ENCODE measurements at regions of chr19 and their contacts with region 1.

Region 1: GRCh38 chr19:17654993-17655392 is 33.2 kb downstream of the UNC13A start:
- DNase-seq: no peak
- ATAC-seq: no peak
- H3K4me3 Mint-ChIP-seq: no peak overlapping the region
- H3K27ac Mint-ChIP-seq: no peak overlapping the region
- H3K4me1 Mint-ChIP-seq: no peaks in the 10 kb centered on the region
- H3K27me3 Mint-ChIP-seq: peaks cover 25% of the 10 kb centered on the region
- CTCF ChIP-seq: no peak

Region 2: GRCh38 chr19:17156927-17157302 is 498.1 kb before region 1 on chr19:
- CTCF ChIA-PET with region 1: no interaction called
- POLR2A ChIA-PET with region 1: no interaction called
- intact Hi-C with region 1: no loop called
- DNase-seq: no peak
- ATAC-seq: peak; percentile 62
- H3K4me3 Mint-ChIP-seq: no peak overlapping the region
- H3K27ac Mint-ChIP-seq: peak overlapping the region; percentile 41
- H3K4me1 Mint-ChIP-seq: no peaks in the 10 kb centered on the region
- H3K27me3 Mint-ChIP-seq: no peaks in the 10 kb centered on the region
- CTCF ChIP-seq: no peak

Region 3: DNA sequence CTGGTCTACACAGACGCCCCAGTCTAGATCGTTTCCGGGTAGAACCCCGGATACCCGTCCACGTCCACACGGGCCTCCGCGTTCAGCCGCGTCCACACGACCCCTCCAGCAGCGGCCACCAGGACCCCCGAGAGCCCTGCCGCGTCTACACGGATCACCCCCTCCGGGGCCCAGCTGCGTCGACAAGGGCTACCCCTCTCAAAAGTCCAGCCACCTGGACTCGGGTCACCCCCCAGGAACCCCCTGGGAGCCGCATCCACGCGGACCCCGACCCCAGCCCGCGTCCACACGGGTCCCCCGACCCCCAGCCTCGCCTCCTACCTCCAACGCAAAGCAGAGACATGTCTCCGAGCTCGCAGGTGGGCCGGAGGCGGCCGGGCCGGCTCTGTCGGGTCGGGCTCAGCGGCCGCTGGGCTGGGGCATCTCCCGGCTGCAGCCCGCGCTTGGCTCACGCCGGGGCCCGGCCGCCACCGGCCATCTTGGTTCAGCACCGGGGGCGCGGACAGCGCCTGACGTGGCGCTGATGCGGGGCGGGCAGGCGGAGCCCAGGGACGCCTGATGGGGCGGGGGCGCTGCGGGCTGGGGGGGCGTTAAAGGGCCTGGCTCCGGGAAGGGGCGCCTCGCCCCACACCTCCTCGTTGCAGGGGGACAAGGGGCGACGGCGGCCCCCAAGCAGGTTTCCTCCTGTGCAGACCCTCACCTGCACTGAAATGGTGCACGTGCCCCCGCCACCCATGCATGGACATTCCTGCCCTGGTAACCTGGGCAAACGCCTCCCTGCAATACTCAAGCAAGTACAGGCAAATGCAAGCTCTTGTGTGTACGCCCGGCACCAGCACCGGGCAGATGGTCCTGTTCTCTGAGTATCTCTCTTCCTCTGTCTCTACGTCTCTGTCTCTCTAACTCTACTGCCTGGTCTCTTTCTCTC is 33.1 kb after region 1 on chr19 and contains the start of gene UNC13A:
- CTCF ChIA-PET with region 1: no interaction called
- POLR2A ChIA-PET with region 1: interaction called, 10 read pairs
- intact Hi-C with region 1: no loop called
- DNase-seq: peak; percentile 48
- ATAC-seq: peak; percentile 90
- H3K4me3 Mint-ChIP-seq: peak within 1 kb of the TSS; percentile 11
- H3K27ac Mint-ChIP-seq: no peak within 1 kb of the TSS
- H3K4me1 Mint-ChIP-seq: peaks cover 18% of the 10 kb centered on the region
- H3K27me3 Mint-ChIP-seq: peaks cover 62% of the 10 kb centered on the region
- CTCF ChIP-seq: no peak
- total RNA-seq, gene UNC13A: 0.02 and 0.04 TPM in 2 replicates

Measured in activated B cell treated with CpG ODN at 0.5 μM for 24 hours (primary cell).